ENCODE measurements at regions of chr4 and their contacts with region 1.

Region 1: DNA sequence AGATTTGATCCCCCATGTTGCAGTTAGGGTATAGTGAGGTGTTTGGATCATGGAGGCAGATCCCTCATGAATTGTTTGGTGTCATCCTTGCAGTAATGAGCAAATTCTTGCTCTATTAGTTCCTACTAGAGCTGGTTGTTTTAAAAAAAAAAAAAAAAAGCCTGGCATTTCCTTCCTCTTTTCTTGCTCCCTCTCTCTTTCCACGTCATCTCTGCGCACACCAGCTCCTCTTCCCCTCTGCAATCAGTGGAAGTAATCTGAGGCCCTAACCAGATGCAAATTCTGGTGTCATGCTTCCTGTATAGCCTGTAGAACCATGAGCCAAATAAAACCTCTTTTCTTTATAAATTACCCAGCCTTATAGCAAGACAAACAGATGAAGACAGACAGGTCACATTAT is 24.5 kb downstream of the WDR17 start:
- DNase-seq: no peak
- H3K4me3 ChIP-seq: no peak overlapping the region
- H3K27ac ChIP-seq: no peak overlapping the region
- H3K4me1 ChIP-seq: no peaks in the 10 kb centered on the region
- H3K27me3 ChIP-seq: no peaks in the 10 kb centered on the region
- CTCF ChIP-seq: no peak

Region 2: DNA sequence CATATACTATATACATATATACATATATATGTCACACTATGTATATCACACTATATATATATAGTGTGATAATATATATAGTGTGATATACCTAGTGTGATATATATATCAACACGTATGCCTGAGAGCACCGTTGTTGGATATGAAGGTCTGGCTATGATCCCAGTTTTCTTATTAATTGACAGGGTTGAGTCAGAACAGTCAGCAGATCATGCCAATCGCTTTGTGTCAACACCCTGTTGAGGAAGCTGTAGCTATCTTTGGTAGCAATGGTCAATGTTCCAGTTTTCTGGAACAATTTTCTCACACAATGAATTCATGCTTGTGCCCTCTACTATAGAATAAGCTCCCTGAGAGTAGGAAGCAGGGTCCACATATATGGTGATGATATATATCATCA is 1848.1 kb after region 1 on chr4:
- CTCF ChIA-PET with region 1: no interaction called
- POLR2A ChIA-PET with region 1: interaction called, 11 read pairs
- intact Hi-C with region 1: no loop called
- DNase-seq: no peak
- H3K4me3 ChIP-seq: no peak overlapping the region
- H3K27ac ChIP-seq: no peak overlapping the region
- H3K4me1 ChIP-seq: no peaks in the 10 kb centered on the region
- H3K27me3 ChIP-seq: no peaks in the 10 kb centered on the region
- CTCF ChIP-seq: no peak